ENCODE measurements at regions of chr11 and their contacts with region 1.

Region 1: DNA sequence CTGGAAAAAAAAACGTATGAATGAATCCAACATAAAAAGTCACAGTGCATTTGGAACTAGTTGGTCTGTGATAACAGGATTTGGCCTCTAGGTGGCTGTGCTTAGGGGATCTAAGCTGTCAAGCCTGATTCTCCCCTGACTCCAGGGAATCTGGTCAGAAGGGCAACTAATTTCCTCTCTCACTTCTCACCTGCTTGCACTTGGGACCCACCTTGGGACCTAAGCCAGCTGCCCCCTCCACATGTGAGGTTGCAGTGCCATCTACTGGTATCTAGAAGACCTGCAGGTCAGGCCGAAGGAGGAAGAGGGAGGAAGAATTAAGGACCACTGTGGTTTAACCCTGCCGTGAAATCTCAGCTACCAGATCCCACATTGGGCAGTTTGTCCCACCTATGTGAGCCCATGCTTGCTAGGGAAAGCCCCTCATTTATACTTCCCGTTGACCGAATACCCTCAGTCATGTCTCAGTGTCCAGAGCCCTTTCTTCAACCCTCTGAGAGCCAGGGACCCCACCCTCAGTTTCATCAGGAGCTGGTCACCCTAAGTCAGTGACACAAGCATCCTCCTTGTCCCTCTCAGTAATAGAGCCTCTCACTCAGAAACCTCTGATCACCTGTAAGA is 33.2 kb upstream of the CAVIN3 start:
- DNase-seq: peak; percentile 78 to 90
- H3K4me3 ChIP-seq: no peak overlapping the region
- H3K27ac ChIP-seq: no peak overlapping the region
- H3K4me1 ChIP-seq: no peaks in the 10 kb centered on the region
- H3K27me3 ChIP-seq: no peaks in the 10 kb centered on the region
- CTCF ChIP-seq: peak; percentile 77 to 98 (median 97)
- EP300 ChIP-seq: no peak; a peak in 1 of 3 replicates
- POLR2A ChIP-seq: no peak
- RAD21 ChIP-seq: peak; percentile 100

Region 2: GRCh38 chr11:5992604-5993251 is 360.7 kb before region 1 on chr11:
- CTCF ChIA-PET with region 1: interaction called, 10 read pairs
- POLR2A ChIA-PET with region 1: no interaction called
- DNase-seq: no peak
- H3K4me3 ChIP-seq: no peak overlapping the region
- H3K27ac ChIP-seq: no peak overlapping the region
- H3K4me1 ChIP-seq: no peaks in the 10 kb centered on the region
- H3K27me3 ChIP-seq: no peaks in the 10 kb centered on the region
- CTCF ChIP-seq: peak in 2 of 3 experiments; percentile 55 to 74; a peak in 3 of 4 replicates
- EP300 ChIP-seq: no peak
- POLR2A ChIP-seq: no peak
- RAD21 ChIP-seq: peak; percentile 55 to 63

Region 3: DNA sequence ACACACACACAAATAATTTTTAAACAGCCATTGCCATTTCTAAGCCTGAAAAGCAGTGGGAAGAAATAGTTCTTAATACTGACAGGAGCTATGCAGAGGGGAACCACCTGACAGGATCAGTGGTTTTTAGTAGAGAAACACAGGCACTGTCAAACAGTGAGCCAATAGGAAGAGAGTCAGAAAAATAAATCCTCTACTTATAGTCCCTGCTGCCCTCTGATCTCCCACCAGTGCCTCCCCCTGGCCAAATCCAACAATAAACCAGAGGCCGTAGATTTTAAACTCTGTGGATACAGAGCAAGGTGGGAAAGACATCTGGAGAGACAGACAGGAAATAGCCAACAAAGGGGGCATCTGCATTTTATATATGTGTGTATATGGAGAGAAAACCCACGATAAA is 253.9 kb before region 1 on chr11:
- CTCF ChIA-PET with region 1: interaction called, 10 read pairs
- POLR2A ChIA-PET with region 1: no interaction called
- DNase-seq: no peak
- H3K4me3 ChIP-seq: no peak overlapping the region
- H3K27ac ChIP-seq: no peak overlapping the region
- H3K4me1 ChIP-seq: no peaks in the 10 kb centered on the region
- H3K27me3 ChIP-seq: no peaks in the 10 kb centered on the region
- CTCF ChIP-seq: peak; percentile 28 to 57 (median 50)
- EP300 ChIP-seq: no peak
- POLR2A ChIP-seq: no peak
- RAD21 ChIP-seq: peak; percentile 46 to 60

Region 4: DNA sequence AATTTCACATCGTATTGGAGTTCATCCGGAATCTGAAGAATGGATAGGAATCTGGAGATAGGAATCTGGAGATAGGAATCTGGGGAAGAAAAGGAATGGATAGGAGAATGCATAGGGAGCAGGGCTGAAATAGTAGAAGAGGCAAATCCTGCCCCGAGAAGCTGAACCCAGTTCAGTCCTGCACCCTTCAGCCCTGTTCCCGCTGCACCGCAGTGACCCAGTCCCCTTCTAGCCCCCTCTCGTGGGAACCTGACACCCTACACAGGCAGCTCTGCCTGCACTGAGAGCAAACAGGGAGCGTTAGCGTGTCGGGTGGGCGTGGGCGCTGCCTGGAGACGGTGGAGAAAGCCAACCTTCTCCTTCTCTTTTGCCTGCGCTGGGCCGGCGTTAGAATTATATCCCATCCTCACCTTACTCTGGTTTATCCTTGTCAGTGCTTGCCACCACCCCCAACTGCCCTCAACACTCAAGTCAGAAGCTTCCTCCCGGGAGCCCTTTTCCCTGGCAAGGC is 94.9 kb before region 1 on chr11:
- CTCF ChIA-PET with region 1: interaction called, 120 read pairs
- POLR2A ChIA-PET with region 1: no interaction called
- DNase-seq: no peak
- H3K4me3 ChIP-seq: peak overlapping the region; percentile 22 to 72 (median 46); a peak in 7 of 8 replicates
- H3K27ac ChIP-seq: no peak overlapping the region
- H3K4me1 ChIP-seq: peaks cover 0 to 18% (median 9%) of the 10 kb centered on the region in 4 experiments; a peak in 6 of 7 replicates
- H3K27me3 ChIP-seq: peaks cover 16 to 58% (median 38%) of the 10 kb centered on the region in 4 experiments
- CTCF ChIP-seq: peak; percentile 3 to 19 (median 17)
- EP300 ChIP-seq: no peak
- POLR2A ChIP-seq: no peak
- RAD21 ChIP-seq: no peak

Region 5: GRCh38 chr11:6298605-6299004 is 54.9 kb before region 1 on chr11:
- CTCF ChIA-PET with region 1: interaction called, 24 read pairs
- POLR2A ChIA-PET with region 1: interaction called, 3 read pairs
- DNase-seq: peak in 1 of 2 experiments; percentile 81
- H3K4me3 ChIP-seq: no peak overlapping the region
- H3K27ac ChIP-seq: no peak overlapping the region
- H3K4me1 ChIP-seq: peaks cover 1 to 7% (median 2%) of the 10 kb centered on the region in 4 experiments; a peak in 5 of 7 replicates
- H3K27me3 ChIP-seq: no peaks in the 10 kb centered on the region; a peak in 1 of 7 replicates
- CTCF ChIP-seq: peak; percentile 100
- EP300 ChIP-seq: no peak
- POLR2A ChIP-seq: no peak
- RAD21 ChIP-seq: peak; percentile 72 to 86

Region 6: GRCh38 chr11:6315811-6316425 is 37.6 kb before region 1 on chr11:
- CTCF ChIA-PET with region 1: interaction called, 145 read pairs
- POLR2A ChIA-PET with region 1: no interaction called
- DNase-seq: peak in 1 of 2 experiments; percentile 65
- H3K4me3 ChIP-seq: no peak overlapping the region
- H3K27ac ChIP-seq: no peak overlapping the region
- H3K4me1 ChIP-seq: peaks cover 2 to 24% (median 16%) of the 10 kb centered on the region in 4 experiments
- H3K27me3 ChIP-seq: peaks cover 0 to 3% (median 1%) of the 10 kb centered on the region in 4 experiments; a peak in 1 of 7 replicates
- CTCF ChIP-seq: peak; percentile 92 to 97 (median 96)
- EP300 ChIP-seq: no peak
- POLR2A ChIP-seq: no peak
- RAD21 ChIP-seq: peak; percentile 92 to 95

Region 7: DNA sequence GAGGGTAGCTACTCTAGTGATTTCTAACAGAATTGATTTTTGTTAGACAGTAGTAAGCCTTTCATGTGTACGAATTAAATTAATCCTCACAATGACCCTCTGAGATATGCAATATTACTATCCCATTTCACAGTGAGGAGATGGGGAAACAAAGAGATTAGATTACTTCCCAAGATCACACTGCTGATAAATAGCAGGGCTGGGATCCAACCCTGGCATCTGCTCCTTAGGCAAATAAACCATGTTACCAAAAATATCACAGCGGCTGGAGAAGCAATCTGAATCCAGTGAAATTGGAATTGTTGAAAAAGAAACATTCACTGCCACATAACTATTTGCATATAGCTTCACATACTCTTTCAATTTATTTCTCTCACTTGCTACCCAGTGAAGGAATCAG is 20.4 kb before region 1 on chr11:
- CTCF ChIA-PET with region 1: interaction called, 53 read pairs
- POLR2A ChIA-PET with region 1: no interaction called
- DNase-seq: peak in 1 of 2 experiments; percentile 6
- H3K4me3 ChIP-seq: no peak overlapping the region
- H3K27ac ChIP-seq: no peak overlapping the region
- H3K4me1 ChIP-seq: peaks cover 0 to 4% (median 2%) of the 10 kb centered on the region in 4 experiments; a peak in 3 of 7 replicates
- H3K27me3 ChIP-seq: no peaks in the 10 kb centered on the region
- CTCF ChIP-seq: no peak
- EP300 ChIP-seq: no peak
- POLR2A ChIP-seq: no peak
- RAD21 ChIP-seq: no peak

Region 8: DNA sequence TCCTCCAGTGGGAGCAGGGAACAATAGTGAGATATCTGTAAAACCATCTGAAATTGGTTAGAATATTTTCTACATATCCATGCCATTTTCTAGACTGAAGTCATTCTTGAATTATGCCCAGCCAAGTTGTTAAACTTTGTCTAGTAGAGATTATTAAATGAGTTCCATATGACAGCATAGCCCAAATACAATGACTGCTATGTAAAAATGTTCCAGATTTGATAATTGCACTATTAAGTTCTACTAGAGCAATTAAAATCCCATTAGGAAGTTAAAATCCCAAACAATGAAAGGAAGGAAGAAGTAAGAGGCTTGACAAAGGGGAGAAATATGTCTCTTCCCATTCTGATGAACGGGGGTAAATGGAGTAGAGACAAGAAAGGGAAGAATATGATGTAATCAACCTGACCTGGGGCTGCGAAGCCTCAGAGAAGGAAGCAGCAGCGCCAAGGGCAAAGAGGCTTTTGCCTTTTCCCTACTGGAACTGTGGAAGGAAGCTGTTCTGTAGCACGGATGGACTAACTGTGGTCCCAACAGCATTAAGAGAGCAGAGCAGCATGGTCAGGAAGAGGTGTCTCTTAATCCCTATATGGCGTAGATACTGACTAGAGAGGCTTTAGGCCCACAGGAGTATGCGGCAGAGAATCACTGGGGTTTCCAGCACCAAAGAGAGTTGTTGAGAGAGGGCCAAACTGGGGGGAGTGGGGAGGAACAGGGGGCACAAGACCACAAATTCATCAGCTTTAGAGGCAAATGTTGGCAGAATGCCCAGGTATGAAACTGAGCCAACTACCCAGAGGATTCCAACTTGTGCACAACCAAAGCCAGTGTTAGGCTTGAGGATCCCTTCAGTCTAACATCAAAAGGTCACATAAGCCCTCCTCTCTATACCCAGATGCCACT is 223.2 kb after region 1 on chr11:
- CTCF ChIA-PET with region 1: no interaction called
- POLR2A ChIA-PET with region 1: no interaction called
- DNase-seq: peak in 1 of 2 experiments; percentile 26
- H3K4me3 ChIP-seq: no peak overlapping the region
- H3K27ac ChIP-seq: no peak overlapping the region
- H3K4me1 ChIP-seq: no peaks in the 10 kb centered on the region
- H3K27me3 ChIP-seq: no peaks in the 10 kb centered on the region
- CTCF ChIP-seq: no peak
- EP300 ChIP-seq: no peak
- POLR2A ChIP-seq: no peak
- RAD21 ChIP-seq: no peak